ENCODE measurements at regions of chrX and their contacts with region 1.

Region 1: DNA sequence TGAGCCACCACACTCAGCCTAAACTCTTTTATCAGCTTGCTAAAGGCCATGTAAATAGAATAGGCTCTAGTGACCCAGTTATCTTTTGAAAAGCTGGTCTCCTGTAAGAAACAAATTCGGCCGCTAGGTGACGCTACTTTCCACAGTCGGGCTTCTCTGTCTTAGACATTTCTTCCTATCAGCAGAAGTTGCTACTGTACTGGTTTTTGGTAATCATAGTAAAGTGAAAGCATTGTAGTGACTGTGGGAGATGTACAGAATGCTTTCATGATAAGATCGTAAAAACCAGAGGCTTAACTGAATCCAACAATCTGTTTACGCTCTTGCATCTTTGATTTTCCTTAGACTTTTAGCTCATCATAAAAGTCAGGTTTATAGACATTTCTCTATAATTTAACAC is 82.6 kb downstream of the GK start:
- DNase-seq: peak; percentile 44 to 77 (median 62)
- ATAC-seq: peak; percentile 86
- H3K4me3 ChIP-seq: no peak overlapping the region
- H3K4me3 Mint-ChIP-seq: no peak overlapping the region
- H3K27ac ChIP-seq: no peak overlapping the region
- H3K27ac Mint-ChIP-seq: no peak overlapping the region
- H3K4me1 ChIP-seq: no peaks in the 10 kb centered on the region
- H3K4me1 Mint-ChIP-seq: peaks cover 5% of the 10 kb centered on the region
- H3K27me3 ChIP-seq: no peaks in the 10 kb centered on the region
- H3K27me3 Mint-ChIP-seq: no peaks in the 10 kb centered on the region
- CTCF ChIP-seq: peak; percentile 60

Region 2: DNA sequence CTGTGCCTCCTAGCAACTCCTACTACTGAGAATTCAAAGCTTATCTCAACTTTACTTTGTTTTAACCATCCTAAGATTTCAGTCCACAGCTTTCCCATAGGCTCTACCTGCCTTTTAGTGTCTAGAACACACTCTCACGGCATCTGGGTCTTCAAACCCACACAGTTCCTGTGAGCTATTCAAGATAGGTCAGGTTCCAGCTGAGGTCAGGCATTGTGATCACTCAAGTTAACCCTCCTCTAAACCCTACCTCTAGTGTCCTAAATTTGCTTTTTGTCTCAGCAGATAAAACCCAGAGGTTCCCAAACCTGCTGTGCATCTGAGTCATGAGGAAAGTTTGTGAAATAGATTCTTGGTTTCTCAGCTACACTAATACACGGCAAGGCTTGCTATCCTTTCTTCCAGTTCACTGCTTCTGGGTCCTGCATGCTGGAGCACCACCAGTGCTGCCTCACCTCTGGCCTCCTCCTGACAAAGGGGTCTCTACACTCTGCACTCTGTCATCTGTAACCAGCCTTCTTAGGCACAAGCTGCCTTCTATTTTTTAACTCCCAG is 845.1 kb before region 1 on chrX:
- CTCF ChIA-PET with region 1: no interaction called
- POLR2A ChIA-PET with region 1: no interaction called
- intact Hi-C with region 1: no loop called
- DNase-seq: no peak
- ATAC-seq: no peak
- H3K4me3 ChIP-seq: no peak overlapping the region
- H3K4me3 Mint-ChIP-seq: no peak overlapping the region
- H3K27ac ChIP-seq: no peak overlapping the region
- H3K27ac Mint-ChIP-seq: no peak overlapping the region
- H3K4me1 ChIP-seq: no peaks in the 10 kb centered on the region
- H3K4me1 Mint-ChIP-seq: no peaks in the 10 kb centered on the region
- H3K27me3 ChIP-seq: no peaks in the 10 kb centered on the region
- H3K27me3 Mint-ChIP-seq: no peaks in the 10 kb centered on the region
- CTCF ChIP-seq: no peak

Region 3: GRCh38 chrX:31423609-31424189 is 687.9 kb after region 1 on chrX:
- CTCF ChIA-PET with region 1: no interaction called
- POLR2A ChIA-PET with region 1: no interaction called
- intact Hi-C with region 1: loop called (anchors 10 kb)
- DNase-seq: peak in 3 of 14 experiments; percentile 1 to 6 (median 5)
- ATAC-seq: no peak
- H3K4me3 ChIP-seq: no peak overlapping the region
- H3K4me3 Mint-ChIP-seq: no peak overlapping the region
- H3K27ac ChIP-seq: no peak overlapping the region
- H3K27ac Mint-ChIP-seq: no peak overlapping the region
- H3K4me1 ChIP-seq: no peaks in the 10 kb centered on the region
- H3K4me1 Mint-ChIP-seq: no peaks in the 10 kb centered on the region
- H3K27me3 ChIP-seq: no peaks in the 10 kb centered on the region
- H3K27me3 Mint-ChIP-seq: no peaks in the 10 kb centered on the region
- CTCF ChIP-seq: no peak

Region 4: DNA sequence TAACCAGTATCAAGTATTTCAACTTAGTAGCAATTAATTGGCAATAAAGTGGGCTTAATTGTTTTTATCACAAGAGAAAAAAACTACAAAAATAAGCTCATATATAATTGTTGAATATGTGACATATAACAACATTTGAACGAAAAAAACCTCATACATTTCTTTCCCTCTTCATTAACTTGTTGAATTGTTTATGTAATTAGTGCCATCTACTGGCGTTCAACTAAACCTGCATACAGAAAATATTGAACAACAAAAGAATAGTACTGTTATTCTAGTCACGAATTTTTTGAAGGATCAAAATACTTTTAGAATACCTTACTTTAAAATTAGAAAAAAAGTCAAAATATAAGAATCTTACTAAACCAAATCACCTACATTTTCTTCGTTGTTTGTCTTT is 922.5 kb after region 1 on chrX:
- CTCF ChIA-PET with region 1: no interaction called
- POLR2A ChIA-PET with region 1: no interaction called
- intact Hi-C with region 1: loop called in 1 of 2 experiments (anchors 5 kb)
- DNase-seq: peak in 1 of 14 experiments; percentile 1
- ATAC-seq: no peak
- H3K4me3 ChIP-seq: no peak overlapping the region
- H3K4me3 Mint-ChIP-seq: no peak overlapping the region
- H3K27ac ChIP-seq: no peak overlapping the region
- H3K27ac Mint-ChIP-seq: no peak overlapping the region
- H3K4me1 ChIP-seq: no peaks in the 10 kb centered on the region
- H3K4me1 Mint-ChIP-seq: no peaks in the 10 kb centered on the region
- H3K27me3 ChIP-seq: no peaks in the 10 kb centered on the region
- H3K27me3 Mint-ChIP-seq: no peaks in the 10 kb centered on the region
- CTCF ChIP-seq: no peak

Region 5: GRCh38 chrX:31747411-31747810 is 1011.6 kb after region 1 on chrX:
- CTCF ChIA-PET with region 1: no interaction called
- POLR2A ChIA-PET with region 1: no interaction called
- intact Hi-C with region 1: no loop called
- DNase-seq: no peak
- ATAC-seq: no peak
- H3K4me3 ChIP-seq: no peak overlapping the region
- H3K4me3 Mint-ChIP-seq: no peak overlapping the region
- H3K27ac ChIP-seq: no peak overlapping the region
- H3K27ac Mint-ChIP-seq: no peak overlapping the region
- H3K4me1 ChIP-seq: no peaks in the 10 kb centered on the region
- H3K4me1 Mint-ChIP-seq: no peaks in the 10 kb centered on the region
- H3K27me3 ChIP-seq: no peaks in the 10 kb centered on the region
- H3K27me3 Mint-ChIP-seq: no peaks in the 10 kb centered on the region
- CTCF ChIP-seq: no peak

Measured in CD4-positive, alpha-beta T cell (primary cell).